ENCODE measurements at regions of chr9 and their contacts with region 1.

Region 1: DNA sequence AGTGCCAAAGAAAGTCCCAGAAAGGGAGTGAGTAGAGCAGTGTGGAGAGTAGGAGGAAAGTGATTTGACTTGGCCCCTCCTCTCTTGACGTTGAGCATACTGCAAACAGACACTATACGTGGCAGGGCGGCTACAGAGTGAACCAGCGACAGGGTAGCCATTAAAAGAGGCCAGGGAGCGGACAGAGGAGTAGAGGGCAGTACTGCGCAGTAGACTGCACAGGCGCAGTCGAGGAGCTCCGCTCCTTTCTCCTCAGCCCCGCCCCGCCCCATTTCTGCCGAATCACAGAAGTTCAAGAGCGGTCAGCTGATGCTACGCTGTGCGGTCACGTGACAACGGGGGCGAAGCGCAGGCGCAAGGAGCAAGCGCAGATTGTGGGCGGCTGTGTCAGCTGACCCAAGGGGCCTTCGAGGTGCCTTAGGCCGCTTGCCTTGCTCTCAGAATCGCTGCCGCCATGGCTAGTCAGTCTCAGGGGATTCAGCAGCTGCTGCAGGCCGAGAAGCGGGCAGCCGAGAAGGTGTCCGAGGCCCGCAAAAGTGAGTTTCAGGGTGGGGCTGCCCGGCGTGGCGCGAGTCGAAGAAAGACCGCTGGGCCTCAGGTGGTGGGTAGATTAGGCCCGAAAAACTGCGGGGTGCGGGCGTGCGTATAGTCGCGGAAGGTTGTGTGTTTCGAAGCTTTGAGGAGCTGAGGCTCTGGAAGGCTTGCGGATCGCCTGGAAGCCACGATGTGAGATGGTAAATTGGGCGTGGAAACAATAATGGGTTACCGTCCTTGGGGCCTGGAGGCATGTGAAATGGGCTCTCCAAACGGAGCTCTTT is at the start of gene ATP6V1G1:
- DNase-seq: peak; percentile 100
- H3K4me3 Mint-ChIP-seq: peak within 1 kb of the TSS; percentile 99
- H3K27ac Mint-ChIP-seq: peak within 1 kb of the TSS; percentile 97
- H3K4me1 Mint-ChIP-seq: peaks cover 40% of the 10 kb centered on the region
- H3K27me3 Mint-ChIP-seq: no peaks in the 10 kb centered on the region
- total RNA-seq, gene ATP6V1G1: 32.1 to 38.9 TPM

Region 2: DNA sequence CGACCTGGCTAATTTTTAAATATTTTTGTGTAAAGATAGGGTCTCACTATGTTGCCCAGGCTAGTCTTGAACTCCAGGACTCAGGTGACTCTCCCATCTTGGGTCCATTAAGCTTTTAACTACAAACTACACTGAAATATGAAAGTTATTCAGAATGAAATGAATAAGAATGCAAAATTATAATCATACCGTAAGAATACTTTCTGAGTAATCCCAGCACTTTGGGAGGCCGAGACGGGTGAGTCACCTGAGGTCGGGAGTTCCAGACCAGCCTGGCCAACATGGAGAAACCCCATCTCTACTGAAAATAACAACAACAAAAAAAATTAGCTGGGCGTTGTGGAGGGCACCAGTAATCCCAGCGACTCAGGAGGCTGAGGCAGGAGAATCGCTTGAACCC is 265.8 kb before region 1 on chr9:
- CTCF ChIA-PET with region 1: no interaction called
- POLR2A ChIA-PET with region 1: no interaction called
- intact Hi-C with region 1: loop called (anchors 5 kb)
- DNase-seq: peak; percentile 83
- H3K4me3 Mint-ChIP-seq: peak overlapping the region; percentile 16
- H3K27ac Mint-ChIP-seq: peak overlapping the region; percentile 62
- H3K4me1 Mint-ChIP-seq: peaks cover 13% of the 10 kb centered on the region
- H3K27me3 Mint-ChIP-seq: peaks cover 5% of the 10 kb centered on the region

Region 3: GRCh38 chr9:114434878-114435311 is 152.7 kb before region 1 on chr9:
- CTCF ChIA-PET with region 1: interaction called, 14 read pairs
- POLR2A ChIA-PET with region 1: no interaction called
- intact Hi-C with region 1: no loop called
- DNase-seq: peak; percentile 17
- H3K4me3 Mint-ChIP-seq: no peak overlapping the region
- H3K27ac Mint-ChIP-seq: no peak overlapping the region
- H3K4me1 Mint-ChIP-seq: peaks cover 3% of the 10 kb centered on the region
- H3K27me3 Mint-ChIP-seq: no peaks in the 10 kb centered on the region

Region 4: GRCh38 chr9:114472765-114473446 is 114.7 kb before region 1 on chr9:
- CTCF ChIA-PET with region 1: no interaction called
- POLR2A ChIA-PET with region 1: no interaction called
- intact Hi-C with region 1: no loop called
- DNase-seq: no peak
- H3K4me3 Mint-ChIP-seq: no peak overlapping the region
- H3K27ac Mint-ChIP-seq: no peak overlapping the region
- H3K4me1 Mint-ChIP-seq: peaks cover 17% of the 10 kb centered on the region
- H3K27me3 Mint-ChIP-seq: no peaks in the 10 kb centered on the region

Region 5: DNA sequence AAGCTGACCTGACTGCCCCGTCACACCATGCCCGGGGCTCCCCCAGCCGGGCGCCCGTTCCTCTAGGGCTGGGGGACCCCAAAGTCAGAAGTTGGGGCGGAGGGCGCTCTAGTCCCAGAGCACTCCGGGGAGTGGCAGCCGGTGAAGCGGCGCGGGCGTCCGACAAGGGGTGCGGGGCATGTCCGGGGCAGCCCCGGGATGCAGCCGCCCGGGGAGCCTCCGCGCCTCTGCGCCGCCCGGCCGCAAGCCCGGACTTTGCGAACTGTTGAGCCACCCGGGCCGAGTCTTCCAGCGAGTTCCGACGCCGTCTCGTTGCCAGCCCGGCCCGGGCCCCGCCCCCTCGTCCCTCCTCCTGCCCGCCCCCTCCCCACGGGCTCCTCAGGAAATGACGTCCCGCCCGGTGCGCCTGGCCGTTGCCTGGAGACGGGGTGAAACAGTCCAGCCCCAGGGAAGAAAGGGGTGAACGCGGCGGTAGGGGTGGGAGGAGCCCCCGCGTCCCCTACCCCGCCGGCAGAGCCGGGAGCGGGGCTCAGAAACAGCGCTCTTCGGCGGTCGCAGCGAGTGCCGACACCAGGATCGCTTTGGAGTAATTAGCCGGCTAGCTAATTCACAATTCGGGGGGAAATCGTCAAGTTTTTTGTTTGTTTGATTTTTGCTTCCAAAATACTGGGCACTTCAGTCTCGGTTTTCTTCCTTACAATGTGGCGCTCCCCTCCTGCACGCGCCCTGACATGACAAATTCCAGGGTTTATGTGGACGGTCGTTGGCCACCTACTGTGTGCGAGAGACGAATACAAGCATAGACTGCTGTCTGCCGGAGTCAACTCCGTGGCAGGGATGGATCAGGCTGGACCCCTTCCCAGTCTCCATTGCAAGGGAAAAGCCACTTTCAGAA is 82.2 kb before region 1 on chr9 and contains the start of gene WHRN:
- CTCF ChIA-PET with region 1: interaction called, 6 read pairs
- POLR2A ChIA-PET with region 1: interaction called, 5 read pairs
- intact Hi-C with region 1: loop called (anchors 2 kb)
- DNase-seq: peak; percentile 93
- H3K4me3 Mint-ChIP-seq: peak within 1 kb of the TSS; percentile 76
- H3K27ac Mint-ChIP-seq: peak within 1 kb of the TSS; percentile 42
- H3K4me1 Mint-ChIP-seq: peaks cover 24% of the 10 kb centered on the region
- H3K27me3 Mint-ChIP-seq: peaks cover 17% of the 10 kb centered on the region
- total RNA-seq, gene WHRN: 2.8 to 4.4 TPM

Region 6: GRCh38 chr9:114571391-114571790 is 16.2 kb before region 1 on chr9:
- CTCF ChIA-PET with region 1: no interaction called
- POLR2A ChIA-PET with region 1: no interaction called
- intact Hi-C with region 1: no loop called
- DNase-seq: no peak
- H3K4me3 Mint-ChIP-seq: no peak overlapping the region
- H3K27ac Mint-ChIP-seq: no peak overlapping the region
- H3K4me1 Mint-ChIP-seq: no peaks in the 10 kb centered on the region
- H3K27me3 Mint-ChIP-seq: no peaks in the 10 kb centered on the region

Region 7: DNA sequence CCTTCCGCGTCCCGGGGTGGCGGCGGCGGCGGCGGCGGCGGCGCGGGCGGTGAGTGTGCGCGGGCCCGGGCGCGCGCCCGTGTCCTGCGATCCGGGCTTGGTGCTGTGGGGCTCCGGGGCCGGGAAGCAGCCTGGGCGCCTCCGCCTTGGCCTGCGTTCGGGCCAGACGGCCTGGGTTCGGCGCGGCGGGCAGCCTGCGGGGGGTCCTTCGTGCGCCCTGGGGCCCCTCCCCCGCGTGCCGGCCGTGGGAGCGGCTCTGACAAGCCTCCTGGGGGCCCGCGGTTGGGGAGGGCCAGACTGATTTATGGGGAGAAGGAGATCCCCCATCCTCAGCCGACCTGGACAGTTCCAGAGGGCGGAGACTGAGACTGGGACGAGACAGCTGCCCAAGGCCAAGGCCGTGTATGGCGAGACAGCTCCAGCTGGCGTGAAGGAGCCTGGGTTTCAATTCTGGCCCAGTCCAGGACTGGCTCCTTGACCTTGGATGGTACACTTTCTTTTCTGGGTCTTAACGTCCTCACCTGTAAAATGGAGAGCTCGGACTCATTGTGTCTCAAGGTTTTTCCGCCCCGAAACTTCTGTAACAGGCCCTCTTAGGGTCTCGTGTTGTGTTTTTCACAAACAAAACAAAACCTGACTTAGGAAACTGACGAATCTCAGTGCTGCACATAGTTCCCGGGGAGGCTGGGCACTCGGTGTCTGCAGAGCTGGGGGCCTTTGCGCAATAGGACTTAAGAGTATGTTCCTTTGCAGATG is 24.1 kb after region 1 on chr9:
- CTCF ChIA-PET with region 1: interaction called, 9 read pairs
- POLR2A ChIA-PET with region 1: interaction called, 17 read pairs
- intact Hi-C with region 1: loop called (anchors 1 kb)
- DNase-seq: peak; percentile 54
- H3K4me3 Mint-ChIP-seq: peak overlapping the region; percentile 83
- H3K27ac Mint-ChIP-seq: peak overlapping the region; percentile 65
- H3K4me1 Mint-ChIP-seq: peaks cover 47% of the 10 kb centered on the region
- H3K27me3 Mint-ChIP-seq: no peaks in the 10 kb centered on the region

Measured in activated CD4-positive, alpha-beta memory T cell treated with anti-CD3 and anti-CD28 coated beads for 36 hours (primary cell).